ENCODE measurements at regions of chr10 and their contacts with region 1.

Region 1: DNA sequence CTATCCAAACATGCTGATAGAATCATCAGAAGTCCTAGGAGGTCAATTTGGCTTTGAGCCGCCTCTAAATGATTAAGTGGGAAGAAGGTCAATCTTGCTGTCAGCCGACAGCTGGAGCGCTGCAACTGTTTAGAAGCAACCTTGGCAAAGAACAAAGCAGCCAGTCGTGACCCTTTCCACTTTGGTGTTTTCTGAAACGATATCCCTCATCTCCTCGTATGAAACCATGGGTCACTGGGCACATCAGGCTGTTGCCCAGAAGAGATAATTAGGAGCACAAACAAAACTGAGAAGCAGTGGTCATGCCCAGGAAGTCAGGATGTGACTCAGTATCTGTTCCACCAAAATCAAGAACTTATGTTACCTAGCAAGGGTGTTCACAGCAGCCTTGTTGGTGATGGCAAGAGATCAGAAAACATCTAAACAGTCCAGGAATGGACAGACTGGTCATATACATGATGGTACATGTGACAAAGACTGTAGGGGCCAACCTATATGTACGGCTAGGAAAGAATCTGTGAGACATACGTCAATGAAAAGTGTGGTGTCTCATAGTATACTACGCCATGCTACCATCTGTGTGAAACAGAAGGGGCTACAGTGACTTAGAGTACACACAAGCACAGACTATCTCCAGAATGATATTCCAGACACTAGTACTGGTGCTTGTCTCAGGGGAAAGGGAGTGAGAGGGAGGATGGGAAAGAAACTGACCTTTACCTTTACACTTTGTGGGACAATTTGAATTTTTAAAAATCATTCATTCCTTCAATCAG is 22.4 kb downstream of the STN1 start:
- DNase-seq: peak; percentile 77
- ATAC-seq: peak; percentile 78
- H3K4me3 ChIP-seq: peak overlapping the region; percentile 12; the same call in 1 of the 2 replicates
- H3K27ac ChIP-seq: peak overlapping the region; percentile 98
- H3K4me1 ChIP-seq: peaks cover 54% of the 10 kb centered on the region
- H3K27me3 ChIP-seq: no peaks in the 10 kb centered on the region
- CTCF ChIP-seq: no peak

Region 2: DNA sequence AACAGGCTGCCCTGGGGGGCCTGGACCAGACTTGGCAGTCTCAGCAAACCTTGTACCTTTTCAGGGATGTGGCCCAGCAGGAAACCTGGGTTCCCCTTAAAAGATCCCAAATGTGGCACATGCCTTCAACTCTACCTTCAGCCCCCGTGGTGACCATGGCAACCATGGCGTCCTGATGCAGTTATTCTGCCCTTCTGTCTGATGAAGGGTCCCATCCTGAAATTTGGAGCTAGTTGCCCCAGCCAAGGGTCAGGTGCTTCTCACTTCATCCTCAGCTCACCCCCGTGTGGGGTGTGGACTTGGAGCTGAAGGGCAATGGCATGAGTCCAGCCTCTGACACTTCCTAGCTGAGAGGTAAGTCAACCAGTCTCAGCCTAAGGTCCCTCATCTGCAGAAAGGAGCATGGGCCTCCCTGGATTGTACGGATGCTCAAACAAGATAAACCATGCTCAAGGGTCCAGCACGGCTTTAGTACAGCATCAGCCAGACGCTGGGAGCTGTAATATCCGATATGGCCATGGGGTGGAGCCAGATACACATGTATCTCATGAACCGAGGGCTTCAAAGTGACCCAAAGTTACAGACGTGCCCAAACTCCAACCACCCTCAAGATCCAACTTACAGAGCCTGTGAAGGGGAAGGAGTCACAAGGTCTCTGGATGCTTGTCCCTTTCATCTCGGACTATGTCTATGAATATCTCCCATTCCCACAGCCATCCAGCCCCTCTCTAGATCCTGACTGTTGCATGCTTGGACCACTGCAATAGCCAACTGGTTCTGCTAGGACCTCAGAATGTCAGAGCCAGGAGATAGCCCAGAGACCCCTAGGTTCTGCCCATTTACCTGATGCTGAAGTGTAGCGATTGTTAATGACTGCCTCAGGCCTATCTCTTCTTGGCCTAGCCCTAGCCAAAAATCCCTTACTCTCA is 182.8 kb before region 1 on chr10:
- CTCF ChIA-PET with region 1: interaction called, 14 read pairs
- POLR2A ChIA-PET with region 1: no interaction called
- intact Hi-C with region 1: no loop called
- DNase-seq: peak; percentile 89
- ATAC-seq: peak; percentile 45
- H3K4me3 ChIP-seq: no peak overlapping the region
- H3K27ac ChIP-seq: no peak overlapping the region
- H3K4me1 ChIP-seq: peaks cover 49% of the 10 kb centered on the region
- H3K27me3 ChIP-seq: no peaks in the 10 kb centered on the region
- CTCF ChIP-seq: peak; percentile 86

Region 3: GRCh38 chr10:103911021-103911459 is 15.4 kb after region 1 on chr10:
- CTCF ChIA-PET with region 1: interaction called, 3 read pairs
- POLR2A ChIA-PET with region 1: interaction called, 14 read pairs
- intact Hi-C with region 1: loop called (anchors 1 kb)
- DNase-seq: no peak
- ATAC-seq: no peak
- H3K4me3 ChIP-seq: no peak overlapping the region
- H3K27ac ChIP-seq: no peak overlapping the region
- H3K4me1 ChIP-seq: peaks cover 43% of the 10 kb centered on the region
- H3K27me3 ChIP-seq: no peaks in the 10 kb centered on the region
- CTCF ChIP-seq: no peak

Region 4: GRCh38 chr10:103918053-103918846 is 22.7 kb after region 1 on chr10 and contains the start of gene STN1:
- CTCF ChIA-PET with region 1: no interaction called
- POLR2A ChIA-PET with region 1: interaction called, 3 read pairs
- intact Hi-C with region 1: loop called (anchors 2 kb)
- DNase-seq: peak; percentile 90
- ATAC-seq: peak; percentile 90
- H3K4me3 ChIP-seq: peak within 1 kb of the TSS; percentile 72
- H3K27ac ChIP-seq: peak within 1 kb of the TSS; percentile 89
- H3K4me1 ChIP-seq: peaks cover 32% of the 10 kb centered on the region
- H3K27me3 ChIP-seq: no peaks in the 10 kb centered on the region
- CTCF ChIP-seq: no peak
- total RNA-seq, gene STN1: 20.0 and 33.5 TPM in 2 replicates

Region 5: DNA sequence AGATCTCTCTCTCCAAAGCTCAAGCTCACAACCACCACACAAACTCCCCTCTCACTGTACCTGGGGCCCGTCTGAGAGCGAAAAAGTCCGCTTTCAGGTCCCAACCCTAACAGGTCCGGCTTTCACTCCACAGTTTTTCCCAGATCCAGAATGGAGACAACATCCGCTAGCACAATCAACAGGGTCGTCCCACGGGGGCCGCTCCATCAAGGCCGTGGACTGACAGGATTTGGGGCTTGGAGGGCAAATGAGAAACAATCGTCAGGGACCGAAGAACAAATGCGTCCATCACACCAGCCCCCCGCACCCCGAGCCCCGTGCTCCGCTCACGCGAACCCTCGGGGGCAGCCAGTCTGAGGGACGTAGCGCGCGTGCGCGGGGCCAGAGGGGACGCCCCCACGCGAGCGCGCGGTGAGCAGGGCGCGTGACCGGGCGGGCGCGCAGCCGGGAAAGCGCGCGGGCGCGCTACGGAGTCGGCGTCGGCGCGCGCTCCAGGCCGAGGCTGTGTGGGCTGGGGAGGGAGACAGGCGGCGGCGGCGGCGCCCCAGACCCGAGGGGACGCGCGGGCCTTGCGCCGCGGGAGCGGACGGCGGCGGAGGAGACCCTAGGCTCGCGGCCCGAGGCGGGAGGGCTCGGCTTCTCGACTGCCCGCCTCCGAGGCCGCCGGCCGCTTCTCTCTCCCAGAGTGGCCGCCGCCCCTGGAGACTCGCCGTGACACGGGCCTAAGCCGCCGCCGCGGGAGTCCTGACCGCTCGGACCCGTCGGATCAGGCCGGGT is 71.3 kb after region 1 on chr10 and contains the start of gene SLK:
- CTCF ChIA-PET with region 1: interaction called, 6 read pairs
- POLR2A ChIA-PET with region 1: interaction called, 7 read pairs
- intact Hi-C with region 1: loop called (anchors 1 kb)
- DNase-seq: peak; percentile 80
- ATAC-seq: peak; percentile 65
- H3K4me3 ChIP-seq: peak within 1 kb of the TSS; percentile 89
- H3K27ac ChIP-seq: peak within 1 kb of the TSS; percentile 48
- H3K4me1 ChIP-seq: peaks cover 20% of the 10 kb centered on the region
- H3K27me3 ChIP-seq: no peaks in the 10 kb centered on the region
- CTCF ChIP-seq: no peak
- total RNA-seq, gene SLK: 17.3 and 20.2 TPM in 2 replicates

Region 6: DNA sequence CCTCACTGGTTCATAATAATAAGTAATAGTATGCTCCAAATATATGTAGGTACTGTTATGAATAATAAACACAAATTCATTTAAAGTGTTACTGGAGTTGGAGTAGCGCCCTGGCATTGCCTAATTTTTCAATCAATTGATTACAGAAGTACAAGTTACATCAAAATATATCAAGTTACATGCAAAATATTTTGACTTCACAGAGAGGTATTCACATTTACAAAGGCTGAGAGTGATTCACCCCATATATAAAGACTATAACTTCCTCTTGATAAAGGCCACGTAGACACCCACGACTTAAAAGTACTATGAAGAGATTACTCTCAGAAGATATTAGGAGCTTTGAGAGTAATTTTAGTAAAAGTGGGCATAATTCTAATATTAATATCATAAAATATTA is 203.7 kb after region 1 on chr10:
- CTCF ChIA-PET with region 1: no interaction called
- POLR2A ChIA-PET with region 1: no interaction called
- intact Hi-C with region 1: no loop called
- DNase-seq: peak; percentile 57
- ATAC-seq: peak; percentile 85
- H3K4me3 ChIP-seq: no peak overlapping the region
- H3K27ac ChIP-seq: no peak overlapping the region
- H3K4me1 ChIP-seq: peaks cover 17% of the 10 kb centered on the region
- H3K27me3 ChIP-seq: no peaks in the 10 kb centered on the region
- CTCF ChIP-seq: no peak

Region 7: GRCh38 chr10:104777086-104777799 is 881.6 kb after region 1 on chr10:
- CTCF ChIA-PET with region 1: no interaction called
- POLR2A ChIA-PET with region 1: no interaction called
- intact Hi-C with region 1: no loop called
- DNase-seq: no peak
- ATAC-seq: no peak
- H3K4me3 ChIP-seq: no peak overlapping the region
- H3K27ac ChIP-seq: no peak overlapping the region
- H3K4me1 ChIP-seq: no peaks in the 10 kb centered on the region
- H3K27me3 ChIP-seq: no peaks in the 10 kb centered on the region
- CTCF ChIP-seq: no peak

Measured in PC-3 (cell line).